Activated T-helper 1 cell treated with anti-CD3 and anti-CD28 coated beads, Interleukin-12 subunit alpha, Interleukin-12 subunit beta, Interleukin-2, Interleukin-4 antibody, amounts not matched to agents 30 ng/mL and 10 ng/mL and 1 ng/mL, durations not matched to agents 14 hours and 24 hours and 36 hours (primary cell): ENCODE measurements at regions of chr20 and their contacts with region 1.

Region 1: GRCh38 chr20:38165089-38165989 is at the start of gene TGM2:
- DNase-seq: peak; percentile 55
- H3K4me3 Mint-ChIP-seq: peak within 1 kb of the TSS; percentile 15
- H3K27ac Mint-ChIP-seq: peak within 1 kb of the TSS; percentile 37
- H3K4me1 Mint-ChIP-seq: peaks cover 31% of the 10 kb centered on the region
- H3K27me3 Mint-ChIP-seq: peaks cover 5% of the 10 kb centered on the region
- total RNA-seq, gene TGM2: not detected in 2 replicates

Region 2: GRCh38 chr20:38057351-38057972 is 107.9 kb before region 1 on chr20:
- intact Hi-C with region 1: loop called (anchors 1 kb)
- DNase-seq: peak; percentile 56
- H3K4me3 Mint-ChIP-seq: no peak overlapping the region
- H3K27ac Mint-ChIP-seq: peak overlapping the region; percentile 59
- H3K4me1 Mint-ChIP-seq: peaks cover 30% of the 10 kb centered on the region
- H3K27me3 Mint-ChIP-seq: no peaks in the 10 kb centered on the region

Region 3: DNA sequence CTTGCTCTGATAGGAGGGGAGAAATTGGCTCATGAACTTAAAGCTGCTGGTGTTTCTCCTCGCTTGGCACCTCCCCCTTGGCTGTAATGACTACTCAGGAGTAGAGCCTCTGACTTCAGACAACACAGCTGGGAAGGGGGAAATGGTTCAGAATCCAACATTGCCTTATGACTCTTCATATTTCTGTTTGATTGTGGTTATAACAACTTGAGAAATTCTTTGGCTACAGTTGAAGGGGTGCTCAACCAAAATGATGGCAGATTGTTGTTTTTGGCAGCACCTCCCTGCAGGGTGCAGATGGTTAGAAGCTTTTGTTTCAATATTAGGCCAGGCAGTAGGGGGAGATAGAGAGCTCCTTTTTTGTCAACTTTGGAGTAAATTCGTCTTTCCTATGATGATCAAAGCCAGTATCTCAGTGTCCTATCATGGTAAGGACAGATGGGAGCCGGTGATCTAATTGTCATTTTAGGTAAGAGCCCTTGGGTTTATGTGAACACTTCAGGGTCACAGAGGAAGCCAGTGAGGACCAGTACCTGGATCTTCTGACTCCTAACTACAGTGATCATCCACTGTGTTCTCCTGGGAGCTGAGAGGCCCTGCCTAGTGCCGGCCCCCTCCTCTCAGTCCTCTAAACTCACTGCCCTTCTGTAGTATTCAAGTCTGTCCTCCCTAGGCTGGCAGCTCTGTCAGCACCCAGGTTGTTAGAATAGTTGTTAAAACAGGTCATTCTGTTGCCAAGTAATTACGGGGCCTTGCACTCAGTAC is 91.8 kb before region 1 on chr20:
- intact Hi-C with region 1: loop called (anchors 1 kb)
- DNase-seq: peak; percentile 31
- H3K4me3 Mint-ChIP-seq: no peak overlapping the region
- H3K27ac Mint-ChIP-seq: peak overlapping the region; percentile 49
- H3K4me1 Mint-ChIP-seq: peaks cover 7% of the 10 kb centered on the region
- H3K27me3 Mint-ChIP-seq: no peaks in the 10 kb centered on the region

Region 4: DNA sequence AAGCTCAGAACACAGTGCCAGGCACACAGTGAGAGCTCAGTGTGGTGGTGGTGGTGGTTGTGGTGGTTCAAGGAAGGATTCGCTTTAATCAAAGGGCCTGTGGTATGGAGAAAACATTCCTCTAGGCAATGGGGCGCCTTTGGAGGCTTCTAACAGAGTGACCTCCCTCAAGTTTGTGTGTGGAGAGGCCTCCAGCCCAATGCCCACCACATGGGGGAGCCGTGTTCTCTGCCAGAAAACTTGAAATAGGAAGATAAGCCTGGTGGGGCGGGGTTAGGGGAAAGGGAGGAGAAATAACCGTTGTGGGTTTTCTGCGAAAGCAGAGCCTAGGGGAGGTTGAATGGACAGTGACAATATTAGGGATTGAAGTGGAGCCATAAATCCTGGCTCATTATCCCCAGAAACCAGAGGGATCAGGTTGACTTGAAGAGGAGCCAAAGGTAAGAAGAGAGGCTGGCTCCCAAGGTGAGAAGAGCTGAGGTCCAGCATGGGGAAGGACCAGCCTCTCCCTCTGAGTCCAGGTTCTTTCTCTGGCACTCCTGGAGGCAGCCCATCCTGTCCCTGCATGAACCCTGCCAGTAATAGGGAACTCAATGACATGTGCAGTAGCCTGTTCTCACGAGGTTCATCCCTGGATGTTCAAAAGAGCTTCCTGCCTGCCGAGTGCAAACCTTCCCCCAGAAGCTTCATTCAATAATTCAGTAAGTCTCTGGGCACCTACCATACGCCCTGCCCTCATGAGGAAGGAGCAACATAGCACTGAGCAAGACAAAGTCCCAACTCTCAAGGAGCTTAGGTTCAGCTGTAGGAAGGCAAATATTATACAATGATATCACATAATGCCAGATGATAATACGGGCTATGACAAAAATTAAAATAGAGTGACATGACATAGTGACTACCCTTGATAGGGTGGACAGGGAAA is 51.7 kb before region 1 on chr20:
- intact Hi-C with region 1: loop called (anchors 1 kb)
- DNase-seq: no peak
- H3K4me3 Mint-ChIP-seq: no peak overlapping the region
- H3K27ac Mint-ChIP-seq: no peak overlapping the region
- H3K4me1 Mint-ChIP-seq: peaks cover 11% of the 10 kb centered on the region
- H3K27me3 Mint-ChIP-seq: peaks cover 6% of the 10 kb centered on the region

Region 5: GRCh38 chr20:38260378-38261053 is 95.2 kb after region 1 on chr20 and contains the start of gene KIAA1755:
- intact Hi-C with region 1: no loop called
- DNase-seq: no peak
- H3K4me3 Mint-ChIP-seq: no peak within 1 kb of the TSS
- H3K27ac Mint-ChIP-seq: no peak within 1 kb of the TSS
- H3K4me1 Mint-ChIP-seq: no peaks in the 10 kb centered on the region
- H3K27me3 Mint-ChIP-seq: peaks cover 19% of the 10 kb centered on the region
- total RNA-seq, gene KIAA1755: not detected in 2 replicates